WTC11 (cell line): ENCODE measurements at regions of chr17 and their contacts with region 1.

Region 1: DNA sequence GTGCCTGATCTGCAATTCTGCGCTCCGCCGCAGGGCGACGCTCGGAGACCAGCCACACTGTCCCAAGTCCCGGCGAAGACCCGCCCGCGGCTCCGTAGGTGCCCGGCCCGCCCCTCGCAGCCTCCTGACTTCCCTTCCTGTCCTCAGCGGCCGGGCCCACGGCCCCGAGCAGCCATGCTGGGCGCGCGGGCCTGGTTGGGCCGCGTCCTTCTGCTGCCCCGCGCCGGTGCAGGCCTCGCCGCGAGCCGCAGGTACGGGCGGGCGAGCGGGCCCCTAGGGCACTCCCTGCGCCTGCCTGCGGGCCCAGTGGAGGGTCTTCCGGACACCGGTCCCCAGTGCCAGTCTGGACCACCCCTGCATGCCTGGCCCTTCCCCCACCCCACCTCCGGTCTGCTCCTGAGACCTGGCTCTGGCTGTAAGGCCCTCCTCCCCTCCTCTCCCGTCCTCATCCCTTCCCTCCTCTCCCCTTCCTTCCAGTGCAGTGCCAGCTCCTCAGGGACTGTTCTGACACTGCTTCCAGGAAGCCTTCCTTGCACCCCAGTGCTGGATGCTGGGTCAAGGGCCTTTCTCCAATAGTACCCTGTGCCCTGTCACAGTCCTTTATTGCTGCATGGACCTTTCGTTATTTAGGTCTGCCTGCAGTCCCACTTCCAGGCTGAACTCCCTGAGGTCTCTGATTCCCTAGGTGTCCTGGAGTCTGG is at the start of gene SPATA20:
- DNase-seq: peak; percentile 93
- ATAC-seq: peak; percentile 75
- H3K4me3 Mint-ChIP-seq: peak within 1 kb of the TSS; percentile 66
- H3K27ac Mint-ChIP-seq: no peak within 1 kb of the TSS; the same call in 1 of the 2 replicates
- H3K4me1 Mint-ChIP-seq: peaks cover 19% of the 10 kb centered on the region
- H3K27me3 Mint-ChIP-seq: peaks cover 8% of the 10 kb centered on the region
- CTCF ChIP-seq: peak; percentile 95
- total RNA-seq, gene SPATA20: 24.6 to 30.6 TPM (median 26.3 TPM) in 3 replicates

Region 2: GRCh38 chr17:49763735-49764558 is 783.2 kb before region 1 on chr17 and contains the start of gene FAM117A:
- CTCF ChIA-PET with region 1: no interaction called
- POLR2A ChIA-PET with region 1: no interaction called
- DNase-seq: peak; percentile 98
- ATAC-seq: peak; percentile 98
- H3K4me3 Mint-ChIP-seq: peak within 1 kb of the TSS; percentile 93
- H3K27ac Mint-ChIP-seq: peak within 1 kb of the TSS; percentile 74
- H3K4me1 Mint-ChIP-seq: peaks cover 39% of the 10 kb centered on the region
- H3K27me3 Mint-ChIP-seq: peaks cover 29% of the 10 kb centered on the region
- CTCF ChIP-seq: no peak
- total RNA-seq, gene FAM117A: 26.2 to 30.4 TPM (median 29.7 TPM) in 3 replicates

Region 3: GRCh38 chr17:50507871-50508572 is 39.2 kb before region 1 on chr17 and contains the start of gene MYCBPAP:
- CTCF ChIA-PET with region 1: no interaction called
- POLR2A ChIA-PET with region 1: no interaction called
- DNase-seq: peak; percentile 87
- ATAC-seq: peak; percentile 60
- H3K4me3 Mint-ChIP-seq: peak within 1 kb of the TSS; percentile 89
- H3K27ac Mint-ChIP-seq: peak within 1 kb of the TSS; percentile 78
- H3K4me1 Mint-ChIP-seq: peaks cover 30% of the 10 kb centered on the region
- H3K27me3 Mint-ChIP-seq: peaks cover 6% of the 10 kb centered on the region
- CTCF ChIP-seq: no peak
- total RNA-seq, gene MYCBPAP: 5.7 to 6.9 TPM (median 6.6 TPM) in 3 replicates

Region 4: DNA sequence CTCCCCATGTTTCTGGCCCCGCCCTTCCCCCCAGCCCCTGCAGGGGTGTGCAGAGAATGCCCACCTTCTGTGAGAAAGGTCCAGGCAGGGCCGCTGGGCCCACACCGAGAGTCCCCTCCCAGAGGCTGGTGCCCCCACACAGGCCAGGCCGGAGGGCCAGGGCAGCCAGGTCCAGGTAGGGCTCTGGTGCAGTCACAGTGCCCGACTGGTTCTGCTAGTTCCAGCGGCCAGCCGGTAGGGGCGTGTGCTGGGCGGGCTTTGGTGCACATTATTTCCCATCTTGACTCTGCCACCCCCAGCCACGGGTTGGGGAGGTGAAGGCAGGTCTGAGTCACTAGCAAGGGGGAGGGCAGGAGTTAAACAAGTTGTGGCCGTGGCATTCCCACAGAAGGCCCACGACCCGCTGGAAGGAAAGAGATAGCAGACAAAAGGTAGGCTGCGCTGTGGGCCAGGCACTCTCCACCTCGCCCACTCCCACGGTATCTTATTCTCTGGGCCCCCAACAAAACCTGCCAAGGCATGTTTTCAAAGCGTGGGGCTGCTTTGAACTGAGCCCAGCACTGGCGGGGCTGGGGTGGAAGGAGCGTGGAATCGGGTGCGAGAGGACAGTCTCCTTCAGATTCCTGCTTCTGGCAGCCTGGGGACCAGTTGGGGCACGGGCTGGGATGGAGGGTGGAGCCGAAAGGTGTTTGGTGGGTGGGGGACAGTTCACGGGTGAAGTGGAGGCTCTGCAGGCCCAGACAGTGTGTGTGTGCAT is 12.8 kb before region 1 on chr17:
- CTCF ChIA-PET with region 1: interaction called, 24 read pairs
- POLR2A ChIA-PET with region 1: interaction called, 8 read pairs
- DNase-seq: peak; percentile 58
- ATAC-seq: peak; percentile 67
- H3K4me3 Mint-ChIP-seq: peak overlapping the region; percentile 87
- H3K27ac Mint-ChIP-seq: no peak overlapping the region
- H3K4me1 Mint-ChIP-seq: peaks cover 46% of the 10 kb centered on the region
- H3K27me3 Mint-ChIP-seq: peaks cover 26% of the 10 kb centered on the region
- CTCF ChIP-seq: no peak

Region 5: DNA sequence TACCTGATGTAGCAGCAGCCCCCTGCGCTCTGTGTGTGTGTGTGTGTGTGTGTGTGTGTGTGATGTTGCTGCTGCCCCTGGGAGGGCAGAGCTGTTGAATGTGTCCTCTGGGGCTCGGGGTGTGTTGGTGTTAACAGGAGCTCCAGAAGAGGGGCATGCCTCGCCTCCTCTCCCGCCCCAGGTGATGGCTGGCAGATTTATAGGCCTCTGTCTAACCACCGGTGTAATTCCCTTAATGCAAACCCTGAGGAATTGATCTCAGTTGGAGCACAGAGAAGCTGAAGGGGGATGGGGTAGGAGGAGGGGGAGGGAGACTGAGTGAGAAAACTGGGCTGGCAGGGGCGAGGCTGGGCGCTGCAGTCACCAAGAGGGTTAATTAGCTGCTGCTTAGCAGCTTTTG is 23.3 kb after region 1 on chr17:
- CTCF ChIA-PET with region 1: interaction called, 135 read pairs
- POLR2A ChIA-PET with region 1: no interaction called
- DNase-seq: no peak
- ATAC-seq: no peak
- H3K4me3 Mint-ChIP-seq: no peak overlapping the region
- H3K27ac Mint-ChIP-seq: no peak overlapping the region
- H3K4me1 Mint-ChIP-seq: peaks cover 26% of the 10 kb centered on the region
- H3K27me3 Mint-ChIP-seq: peaks cover 22% of the 10 kb centered on the region
- CTCF ChIP-seq: no peak

Region 6: GRCh38 chr17:50593321-50593720 is 46.1 kb after region 1 on chr17:
- CTCF ChIA-PET with region 1: interaction called, 10 read pairs
- POLR2A ChIA-PET with region 1: no interaction called
- DNase-seq: peak; percentile 64
- ATAC-seq: peak; percentile 32
- H3K4me3 Mint-ChIP-seq: no peak overlapping the region
- H3K27ac Mint-ChIP-seq: no peak overlapping the region
- H3K4me1 Mint-ChIP-seq: peaks cover 9% of the 10 kb centered on the region
- H3K27me3 Mint-ChIP-seq: no peaks in the 10 kb centered on the region
- CTCF ChIP-seq: no peak

Region 7: GRCh38 chr17:50620858-50621257 is 73.7 kb after region 1 on chr17:
- CTCF ChIA-PET with region 1: interaction called, 313 read pairs
- POLR2A ChIA-PET with region 1: interaction called, 3 read pairs
- DNase-seq: peak; percentile 75
- ATAC-seq: peak; percentile 83
- H3K4me3 Mint-ChIP-seq: no peak overlapping the region
- H3K27ac Mint-ChIP-seq: no peak overlapping the region
- H3K4me1 Mint-ChIP-seq: peaks cover 20% of the 10 kb centered on the region
- H3K27me3 Mint-ChIP-seq: peaks cover 4% of the 10 kb centered on the region
- CTCF ChIP-seq: peak; percentile 63; the same call in 1 of the 2 replicates

Region 8: DNA sequence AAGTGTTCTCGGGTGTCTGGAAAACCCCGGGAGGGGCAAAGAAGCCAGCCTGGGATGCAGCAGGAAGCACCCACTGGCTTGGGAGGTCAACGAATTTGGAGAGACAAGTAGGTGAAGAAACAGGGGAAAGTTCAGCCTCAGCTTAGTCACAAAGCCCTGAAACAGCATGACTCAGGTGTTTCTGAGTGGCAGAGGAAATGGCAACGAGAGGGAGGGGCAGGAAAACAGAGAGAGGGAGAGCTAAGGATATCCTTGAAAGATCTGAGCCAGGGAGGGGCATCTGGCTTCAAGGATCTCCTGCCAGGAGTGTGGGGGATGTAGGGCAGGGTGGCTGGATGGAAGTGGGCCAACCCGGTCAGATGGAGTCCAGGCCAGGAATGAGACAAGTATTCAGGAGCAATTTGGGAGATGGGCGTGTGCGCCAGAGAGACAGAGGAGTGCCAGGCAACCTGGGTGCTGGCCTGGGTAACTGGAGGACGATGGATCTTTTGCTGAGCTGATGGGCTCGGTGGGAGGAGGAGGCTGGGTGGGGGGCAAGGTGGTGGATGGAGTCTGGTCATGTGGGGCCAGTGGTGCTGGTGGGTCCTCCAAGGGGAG is 114.7 kb after region 1 on chr17:
- CTCF ChIA-PET with region 1: interaction called, 18 read pairs
- POLR2A ChIA-PET with region 1: no interaction called
- DNase-seq: no peak
- ATAC-seq: no peak; the same call in 1 of the 2 replicates
- H3K4me3 Mint-ChIP-seq: no peak overlapping the region
- H3K27ac Mint-ChIP-seq: peak overlapping the region; percentile 71
- H3K4me1 Mint-ChIP-seq: peaks cover 16% of the 10 kb centered on the region
- H3K27me3 Mint-ChIP-seq: no peaks in the 10 kb centered on the region; the same call in 1 of the 2 replicates
- CTCF ChIP-seq: no peak